ENCODE measurements at regions of chr21 and their contacts with region 1.

Region 1: DNA sequence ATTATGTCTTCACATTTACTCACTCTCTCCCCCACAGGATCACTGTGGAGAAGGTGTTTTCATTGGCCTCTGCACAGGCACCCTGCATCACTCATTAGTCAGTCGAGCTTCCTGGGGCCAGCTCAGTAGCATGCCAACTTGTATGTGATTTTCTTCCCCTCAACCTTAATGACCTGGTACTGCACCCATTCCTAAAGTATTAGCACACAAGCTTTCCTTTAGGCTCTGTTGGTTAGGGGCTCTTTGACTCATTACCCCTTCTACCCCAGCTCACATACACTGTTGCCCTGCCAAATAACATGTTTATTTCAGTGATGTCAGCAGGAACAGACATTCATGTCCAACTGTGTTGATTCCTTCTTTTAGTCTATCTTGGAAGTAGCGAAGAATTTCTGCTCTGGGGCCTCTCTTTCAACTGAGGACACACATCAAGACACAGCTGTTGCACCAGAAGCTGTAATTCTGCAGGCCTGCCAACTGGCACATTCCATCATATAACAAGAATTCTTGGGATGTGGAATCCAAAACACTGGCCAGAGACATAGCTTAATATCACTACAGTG is 603.5 kb upstream of the ADAMTS5 start:
- DNase-seq: peak; percentile 73
- ATAC-seq: peak; percentile 96 to 97

Region 2: DNA sequence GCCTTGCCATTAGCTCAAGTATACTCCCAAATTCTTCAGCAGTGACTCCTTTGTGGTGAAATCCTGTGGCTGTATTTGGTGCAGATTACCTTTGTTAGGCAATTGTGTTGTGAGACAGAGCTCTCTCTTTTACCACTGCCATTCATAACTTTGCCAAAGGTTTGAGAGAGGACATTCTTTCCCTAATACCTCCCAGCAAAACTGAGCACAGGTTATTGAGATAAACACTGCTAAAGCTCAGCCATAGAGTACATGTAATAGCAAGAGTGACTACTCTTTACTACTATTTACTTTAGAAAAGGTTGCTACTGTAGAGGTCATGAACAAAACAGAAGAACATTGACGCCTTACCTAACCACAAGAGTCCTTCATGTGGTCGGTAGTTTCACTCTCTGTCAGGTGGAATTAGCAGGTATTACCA is 89.5 kb before region 1 on chr21:
- intact Hi-C with region 1: no loop called
- DNase-seq: no peak
- ATAC-seq: no peak

Region 3: GRCh38 chr21:27693376-27693775 is 123.0 kb after region 1 on chr21:
- intact Hi-C with region 1: loop called in 1 of 2 experiments (anchors 10 kb)
- DNase-seq: no peak
- ATAC-seq: no peak